ENCODE measurements at regions of chr10 and their contacts with region 1.

Region 1: GRCh38 chr10:128530301-128530700 is 404.1 kb upstream of the MKI67 start:
- DNase-seq: no peak
- ATAC-seq: no peak
- H3K4me3 ChIP-seq: no peak overlapping the region
- H3K27ac ChIP-seq: no peak overlapping the region
- H3K4me1 ChIP-seq: no peaks in the 10 kb centered on the region
- H3K27me3 ChIP-seq: peaks cover 0 to 58% (median 33%) of the 10 kb centered on the region in 7 donors
- CTCF ChIP-seq: peak; percentile 34 to 68 (median 57)

Region 2: GRCh38 chr10:127090138-127090537 is 1440.2 kb before region 1 on chr10:
- intact Hi-C with region 1: no loop called
- DNase-seq: no peak
- ATAC-seq: no peak
- H3K4me3 ChIP-seq: no peak overlapping the region
- H3K27ac ChIP-seq: no peak overlapping the region
- H3K4me1 ChIP-seq: no peaks in the 10 kb centered on the region
- H3K27me3 ChIP-seq: no peaks in the 10 kb centered on the region
- CTCF ChIP-seq: no peak

Region 3: GRCh38 chr10:128263891-128264688 is 266.2 kb before region 1 on chr10:
- intact Hi-C with region 1: loop called (anchors 5 to 10 kb)
- DNase-seq: peak; percentile 61 to 66
- ATAC-seq: peak in 3 of 8 donors; percentile 43 to 56 (median 54)
- H3K4me3 ChIP-seq: no peak overlapping the region
- H3K27ac ChIP-seq: no peak overlapping the region
- H3K4me1 ChIP-seq: no peaks in the 10 kb centered on the region
- H3K27me3 ChIP-seq: peaks cover 0 to 84% (median 68%) of the 10 kb centered on the region in 7 donors
- CTCF ChIP-seq: peak; percentile 25 to 74 (median 64)

Region 4: DNA sequence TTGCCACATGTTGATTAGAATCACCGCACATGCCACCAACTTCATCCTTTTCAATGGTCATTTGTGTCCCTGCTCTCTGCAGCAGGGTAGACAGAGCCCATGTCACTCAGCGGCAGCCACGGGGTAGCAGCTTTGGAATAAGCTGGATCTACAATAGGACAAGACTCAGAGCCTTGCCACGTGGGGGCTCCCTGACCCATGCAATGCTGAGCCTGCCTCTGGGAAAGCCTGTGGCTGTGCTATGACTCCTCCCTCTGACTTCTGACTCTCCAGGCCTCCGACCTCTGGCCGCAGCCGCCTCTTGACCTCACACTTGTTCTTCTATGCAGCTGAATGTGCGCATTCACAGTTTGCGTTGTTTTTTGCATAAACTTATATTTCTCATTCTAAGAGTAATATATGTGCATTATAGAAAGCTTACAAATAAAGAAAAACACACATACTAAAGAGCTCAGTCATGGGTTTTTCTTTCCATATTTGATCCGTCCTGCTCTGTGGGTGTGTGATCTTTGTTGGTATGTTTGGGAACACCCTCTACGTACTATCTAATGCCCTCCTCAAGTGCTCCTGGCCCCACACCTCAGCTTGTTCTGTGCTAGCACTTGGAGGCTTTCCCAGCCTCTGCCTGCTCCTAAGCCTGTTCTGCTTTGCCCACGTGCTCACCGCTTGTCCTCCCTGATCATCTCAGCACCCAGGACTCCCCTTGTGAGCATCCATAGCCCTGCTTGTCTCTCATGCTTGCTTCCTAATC is 206.0 kb before region 1 on chr10:
- intact Hi-C with region 1: loop called in 3 of 10 experiments (anchors 5 to 10 kb)
- DNase-seq: peak; percentile 28 to 59
- ATAC-seq: peak; percentile 37 to 94 (median 74)
- H3K4me3 ChIP-seq: no peak overlapping the region
- H3K27ac ChIP-seq: no peak overlapping the region
- H3K4me1 ChIP-seq: peaks cover 0 to 4% (median 0%) of the 10 kb centered on the region in 9 donors
- H3K27me3 ChIP-seq: peaks cover 0 to 46% (median 12%) of the 10 kb centered on the region in 7 donors
- CTCF ChIP-seq: peak in 6 of 9 donors; percentile 27 to 51 (median 33)

Region 5: DNA sequence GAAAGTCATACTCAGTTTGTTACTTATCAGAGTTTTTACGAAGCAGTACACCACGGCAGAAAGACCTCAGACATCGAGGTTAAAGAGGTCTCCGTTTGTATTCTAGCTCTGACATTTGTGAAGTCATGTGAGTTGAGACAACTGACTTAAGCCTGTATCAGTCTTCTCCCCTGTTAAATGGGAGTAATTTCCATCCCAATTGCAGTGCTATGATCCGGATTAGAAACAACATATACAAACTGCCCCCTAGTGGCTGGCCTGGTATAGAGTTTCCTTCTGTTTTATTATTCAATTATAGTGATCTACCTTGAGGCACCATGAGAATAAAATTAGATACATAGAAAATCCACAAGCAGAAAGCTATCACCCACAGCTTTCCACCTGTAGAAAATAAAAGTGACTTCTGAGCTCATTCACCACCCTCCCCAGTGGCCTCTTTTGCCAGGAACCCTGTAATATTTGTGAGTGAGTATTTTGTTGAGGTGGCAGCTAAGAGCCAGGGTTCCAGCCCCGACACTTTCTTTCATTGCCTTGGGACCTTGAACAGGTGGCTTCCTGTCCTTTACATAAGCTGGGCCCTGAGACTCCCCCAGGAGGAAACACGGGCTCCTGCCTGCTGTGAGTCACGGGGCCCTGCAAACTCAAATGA is 329.6 kb after region 1 on chr10:
- intact Hi-C with region 1: loop called in 1 of 10 experiments (anchors 10 kb)
- DNase-seq: peak in 1 of 2 donors; percentile 49
- ATAC-seq: no peak
- H3K4me3 ChIP-seq: no peak overlapping the region
- H3K27ac ChIP-seq: no peak overlapping the region
- H3K4me1 ChIP-seq: peaks cover 6 to 21% (median 12%) of the 10 kb centered on the region in 9 donors
- H3K27me3 ChIP-seq: no peaks in the 10 kb centered on the region
- CTCF ChIP-seq: peak; percentile 44 to 69 (median 62)